ENCODE measurements at regions of chr21 and their contacts with region 1.

Region 1: DNA sequence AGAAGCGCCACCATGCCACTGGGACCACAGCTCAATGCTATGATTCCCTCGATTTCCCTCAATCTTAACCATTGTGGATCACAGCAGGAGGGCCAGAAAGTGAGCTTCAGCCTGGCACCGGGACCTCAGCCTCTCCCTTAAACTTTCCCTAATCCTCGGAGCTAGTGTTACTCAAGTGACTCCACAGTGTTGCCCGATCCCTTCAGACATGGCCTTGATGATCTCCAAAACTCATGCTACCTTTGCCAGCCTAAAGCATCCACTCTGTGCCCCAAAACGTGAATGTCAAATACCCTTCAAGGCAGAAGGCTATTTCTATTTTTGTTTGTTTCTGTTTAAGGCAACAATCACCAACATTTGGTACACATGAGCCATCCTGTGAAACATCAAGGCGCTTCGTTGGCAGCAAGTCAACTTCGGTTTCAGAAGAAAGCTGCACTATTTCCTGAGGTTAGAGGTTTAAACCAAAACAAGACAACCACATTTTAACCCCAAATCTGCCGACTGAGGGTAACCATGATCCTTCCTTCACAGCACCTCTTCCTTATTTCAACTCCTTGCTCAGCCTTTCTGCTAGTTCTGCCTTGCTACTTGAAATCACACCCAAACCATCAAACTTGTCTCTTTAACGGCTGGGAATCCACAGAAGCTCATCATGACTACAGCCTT is 94.4 kb upstream of the KRTAP19-8 start:
- DNase-seq: peak; percentile 89
- H3K4me3 Mint-ChIP-seq: peak overlapping the region; percentile 32
- H3K27ac Mint-ChIP-seq: peak overlapping the region; percentile 83
- H3K4me1 Mint-ChIP-seq: peaks cover 64% of the 10 kb centered on the region
- H3K27me3 Mint-ChIP-seq: no peaks in the 10 kb centered on the region

Region 2: DNA sequence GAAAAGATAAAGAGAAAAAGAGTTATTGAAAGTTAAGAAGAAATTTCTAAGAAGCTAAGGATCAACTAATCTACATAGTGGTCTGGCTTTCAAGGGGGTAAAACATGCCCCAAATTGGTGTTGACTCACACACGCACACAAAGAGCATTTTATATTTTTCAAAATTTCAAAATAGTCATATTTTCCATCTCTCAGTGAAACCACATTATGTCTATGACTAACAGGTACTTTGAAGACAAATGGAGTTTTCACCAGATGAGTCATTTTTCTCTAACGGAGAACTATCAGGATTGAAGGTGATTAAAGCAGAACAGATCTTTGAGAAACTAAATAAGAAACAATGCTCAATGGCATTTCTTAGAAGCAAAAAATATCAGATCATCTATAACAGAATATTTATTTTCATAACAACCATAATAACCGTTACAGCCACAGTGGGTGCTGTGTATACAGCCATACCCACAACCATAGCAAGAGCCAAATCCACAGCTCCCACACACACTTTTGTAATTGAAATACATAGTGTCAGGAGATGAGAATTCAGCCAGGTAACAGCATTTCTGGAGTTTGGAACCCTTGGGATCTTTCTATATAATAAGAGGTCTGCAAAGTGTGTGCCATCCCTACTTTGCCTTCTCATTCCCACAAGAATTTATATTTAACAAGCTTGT is 414.3 kb before region 1 on chr21 and contains the start of gene KRTAP21-3:
- CTCF ChIA-PET with region 1: no interaction called
- intact Hi-C with region 1: loop called (anchors 1 kb)
- DNase-seq: peak; percentile 33
- H3K4me3 Mint-ChIP-seq: no peak within 1 kb of the TSS
- H3K27ac Mint-ChIP-seq: peak within 1 kb of the TSS; percentile 46
- H3K4me1 Mint-ChIP-seq: peaks cover 21% of the 10 kb centered on the region
- H3K27me3 Mint-ChIP-seq: peaks cover 2% of the 10 kb centered on the region
- total RNA-seq, gene KRTAP21-3: not detected

Region 3: DNA sequence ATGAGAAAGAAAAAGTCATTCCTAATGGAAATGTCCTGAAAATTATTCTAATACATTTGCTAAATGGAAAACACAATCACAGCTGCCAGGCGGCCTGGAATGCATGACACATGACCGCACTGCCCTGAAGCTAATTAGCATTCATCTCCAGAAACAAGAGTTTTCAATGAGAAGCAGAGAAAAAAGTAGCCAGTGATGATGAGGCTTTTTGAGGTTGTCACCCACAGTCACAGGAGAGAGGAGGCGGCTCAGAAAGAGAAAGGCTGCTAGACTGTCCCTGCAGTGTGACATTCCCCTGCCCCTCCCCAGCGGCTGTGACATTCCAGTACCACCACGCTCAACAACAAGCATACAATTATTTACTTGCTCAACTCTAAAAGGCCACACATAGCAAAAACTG is 28.4 kb after region 1 on chr21:
- CTCF ChIA-PET with region 1: interaction called, 3 read pairs
- intact Hi-C with region 1: loop called (anchors 1 kb)
- DNase-seq: peak; percentile 60
- H3K4me3 Mint-ChIP-seq: no peak overlapping the region
- H3K27ac Mint-ChIP-seq: peak overlapping the region; percentile 89
- H3K4me1 Mint-ChIP-seq: peaks cover 88% of the 10 kb centered on the region
- H3K27me3 Mint-ChIP-seq: no peaks in the 10 kb centered on the region

Region 4: DNA sequence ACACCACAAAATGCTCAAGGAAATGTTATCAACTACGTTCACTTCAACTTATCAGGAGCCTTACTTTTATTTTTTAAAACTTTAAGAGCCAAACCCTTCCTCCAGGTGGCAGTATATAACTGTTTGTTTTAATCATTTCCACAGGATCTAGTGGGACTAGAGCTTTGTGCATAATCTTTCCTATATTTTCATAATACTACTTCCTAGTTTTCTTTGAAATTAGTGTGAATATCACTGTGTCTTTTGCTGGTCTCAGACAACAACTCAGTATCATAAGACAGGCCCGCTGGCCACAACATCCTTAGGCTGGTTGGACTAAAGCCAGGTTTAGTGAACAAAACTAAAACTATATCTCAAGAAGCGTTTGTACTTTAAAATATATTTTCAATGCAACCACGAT is 65.9 kb after region 1 on chr21:
- CTCF ChIA-PET with region 1: interaction called, 3 read pairs
- intact Hi-C with region 1: loop called (anchors 1 kb)
- DNase-seq: no peak
- H3K4me3 Mint-ChIP-seq: no peak overlapping the region
- H3K27ac Mint-ChIP-seq: no peak overlapping the region
- H3K4me1 Mint-ChIP-seq: peaks cover 51% of the 10 kb centered on the region
- H3K27me3 Mint-ChIP-seq: no peaks in the 10 kb centered on the region

Region 5: DNA sequence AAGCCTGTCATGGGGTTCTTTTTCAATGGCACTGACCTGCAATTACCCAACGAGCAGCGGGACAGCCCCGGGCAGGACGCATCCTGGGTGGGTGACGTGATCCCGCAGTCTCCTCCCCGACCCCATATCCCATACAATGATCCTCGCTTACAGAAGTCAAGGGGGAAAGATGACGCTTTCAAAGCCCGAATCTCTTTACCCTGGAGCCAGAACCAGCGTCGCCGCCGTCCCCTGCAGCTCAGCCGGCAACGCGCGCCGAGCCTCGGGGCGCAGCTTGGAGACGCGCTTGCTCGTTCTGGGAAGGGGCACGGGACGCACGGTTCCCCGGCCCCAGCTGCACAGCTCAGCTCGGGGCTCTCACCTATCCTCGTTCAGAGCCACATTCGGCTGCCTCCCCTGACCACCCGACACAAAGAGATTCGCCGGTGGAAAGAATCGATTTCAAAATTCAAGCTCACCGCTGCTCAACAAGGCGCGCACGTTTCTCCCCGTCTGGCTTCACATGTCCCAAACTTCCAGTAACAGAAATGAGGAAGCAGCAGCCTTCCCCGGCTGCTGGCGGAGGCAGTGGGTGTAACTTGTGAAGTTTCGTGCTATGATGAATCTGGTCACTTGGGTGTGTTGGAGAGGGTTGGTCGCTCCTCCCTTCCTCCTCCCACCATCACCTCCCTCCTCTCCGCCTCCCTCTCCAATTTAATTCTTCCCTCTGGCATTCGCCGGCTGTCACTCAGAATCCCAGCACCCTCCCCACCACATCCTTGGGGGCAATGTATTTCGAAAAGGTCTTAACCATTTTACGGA is 211.2 kb after region 1 on chr21 and contains the start of gene TIAM1:
- CTCF ChIA-PET with region 1: interaction called, 3 read pairs
- intact Hi-C with region 1: loop called (anchors 1 kb)
- DNase-seq: peak; percentile 58
- H3K4me3 Mint-ChIP-seq: peak within 1 kb of the TSS; percentile 91
- H3K27ac Mint-ChIP-seq: peak within 1 kb of the TSS; percentile 88
- H3K4me1 Mint-ChIP-seq: peaks cover 58% of the 10 kb centered on the region
- H3K27me3 Mint-ChIP-seq: no peaks in the 10 kb centered on the region
- total RNA-seq, gene TIAM1: 50.1 to 51.0 TPM

Region 6: DNA sequence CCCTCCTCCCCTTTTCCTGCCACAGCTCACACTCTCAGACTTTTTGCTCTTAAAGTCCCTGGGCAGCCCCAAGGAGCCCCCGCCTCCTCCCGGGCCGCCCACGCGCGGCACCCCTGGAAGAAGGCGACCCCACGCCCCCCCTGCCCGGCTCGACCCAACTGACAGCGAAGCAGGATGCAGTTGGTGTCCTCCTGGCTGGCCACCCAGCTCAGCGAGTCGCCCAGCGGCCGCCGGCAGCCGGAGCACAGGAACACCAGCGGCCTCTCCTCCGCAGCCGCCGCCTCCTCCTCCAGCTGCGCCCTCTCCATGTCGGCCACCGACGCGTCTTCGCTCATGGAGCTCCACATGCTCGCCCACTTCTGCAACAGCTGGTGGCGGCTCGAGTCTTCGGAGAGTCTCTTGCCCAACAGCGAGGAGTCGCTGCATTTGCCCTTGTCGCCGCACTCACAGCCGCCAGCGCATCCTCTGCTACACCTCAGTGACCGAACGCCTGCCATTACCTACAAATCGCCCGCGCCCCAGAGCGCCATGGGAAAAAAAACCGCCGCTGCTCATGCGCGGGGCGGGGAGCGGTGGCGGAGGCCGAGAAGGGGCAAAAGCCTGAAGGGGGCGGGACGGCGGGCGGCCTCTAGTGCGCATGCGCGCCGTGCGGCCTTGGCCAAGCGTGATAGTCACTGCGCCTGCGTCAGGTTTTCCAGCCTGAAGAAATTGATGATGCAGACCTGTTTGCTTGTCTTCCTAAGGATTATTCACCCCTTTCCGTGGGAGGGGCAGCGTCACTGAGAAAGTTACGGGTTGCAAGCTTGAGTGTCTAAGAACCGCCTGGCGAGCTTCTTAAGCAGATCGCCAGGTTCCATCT is 1146.0 kb after region 1 on chr21 and contains the start of gene MIS18A:
- CTCF ChIA-PET with region 1: no interaction called
- intact Hi-C with region 1: loop called (anchors 5 kb)
- DNase-seq: peak; percentile 98
- H3K4me3 Mint-ChIP-seq: peak within 1 kb of the TSS; percentile 100
- H3K27ac Mint-ChIP-seq: peak within 1 kb of the TSS; percentile 90
- H3K4me1 Mint-ChIP-seq: peaks cover 17% of the 10 kb centered on the region
- H3K27me3 Mint-ChIP-seq: no peaks in the 10 kb centered on the region
- total RNA-seq, gene MIS18A: 37.4 to 37.8 TPM

Measured in activated naive CD4-positive, alpha-beta T cell treated with anti-CD3 and anti-CD28 coated beads for 36 hours (primary cell).